ENCODE measurements at regions of chr12 and their contacts with region 1.

Region 1: GRCh38 chr12:119412811-119413794 is 78.6 kb downstream of the CCDC60 start:
- DNase-seq: peak; percentile 44 to 72
- ATAC-seq: peak; percentile 26 to 80 (median 64)
- H3K4me3 ChIP-seq: no peak overlapping the region
- H3K27ac ChIP-seq: no peak overlapping the region
- H3K4me1 ChIP-seq: peaks cover 0 to 16% (median 5%) of the 10 kb centered on the region in 9 donors
- H3K27me3 ChIP-seq: no peaks in the 10 kb centered on the region
- CTCF ChIP-seq: peak; percentile 68 to 94 (median 87)

Region 2: DNA sequence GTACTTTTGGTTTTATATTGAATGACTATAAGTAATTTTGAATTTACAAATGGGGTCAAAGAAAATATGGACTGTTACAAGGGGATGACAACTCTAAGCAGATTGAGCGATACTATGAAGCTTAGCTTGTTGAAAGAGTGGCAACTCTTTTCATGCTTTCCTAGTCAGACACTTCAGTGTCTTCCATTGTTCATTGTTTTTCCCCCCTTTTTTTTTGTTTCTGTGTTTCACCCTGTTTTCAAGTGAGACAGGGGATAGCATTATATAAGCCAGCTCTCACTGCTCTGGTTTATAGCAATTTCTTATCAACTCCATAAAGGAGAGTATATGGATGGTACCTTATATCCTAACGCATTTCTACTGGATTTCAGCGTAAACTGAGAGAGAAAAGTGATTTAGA is 1252.6 kb before region 1 on chr12:
- intact Hi-C with region 1: no loop called
- DNase-seq: no peak
- ATAC-seq: no peak
- H3K4me3 ChIP-seq: no peak overlapping the region
- H3K27ac ChIP-seq: no peak overlapping the region
- H3K4me1 ChIP-seq: no peaks in the 10 kb centered on the region
- H3K27me3 ChIP-seq: no peaks in the 10 kb centered on the region
- CTCF ChIP-seq: no peak

Region 3: DNA sequence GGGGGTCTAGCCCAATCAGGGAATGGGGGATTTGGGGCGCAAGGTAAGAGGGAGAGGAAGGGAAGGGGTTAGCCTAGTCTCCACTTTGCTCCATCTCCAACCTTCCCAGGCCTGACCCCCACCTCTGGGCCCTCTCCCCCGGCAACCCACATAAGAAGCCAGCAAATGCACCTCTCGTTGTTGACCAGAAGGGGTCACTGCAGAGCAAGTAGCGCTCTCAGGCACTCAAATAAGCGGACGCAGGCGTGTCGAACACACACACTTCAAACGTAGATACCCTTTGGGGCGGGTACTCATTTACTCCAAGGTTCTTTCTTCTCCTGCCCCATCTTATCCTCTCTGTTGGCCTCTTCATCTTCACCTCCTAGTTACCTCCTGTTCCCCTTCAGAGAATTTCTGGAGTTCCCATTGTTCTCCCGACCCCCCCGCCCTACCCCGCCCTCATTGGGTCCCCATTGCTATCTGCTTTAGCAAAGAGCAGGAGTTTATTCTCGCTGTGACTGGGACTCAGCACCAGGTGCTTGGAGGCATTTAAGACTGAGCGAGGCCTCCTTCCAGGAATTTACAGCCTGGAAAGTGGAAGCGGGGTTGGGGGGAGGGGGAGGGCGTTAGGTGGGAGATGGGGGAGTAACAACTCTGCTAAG is 433.2 kb before region 1 on chr12:
- intact Hi-C with region 1: loop called in 6 of 10 experiments (anchors 5 to 10 kb)
- DNase-seq: peak in 1 of 2 donors; percentile 17
- ATAC-seq: peak in 5 of 8 donors; percentile 31 to 64 (median 53)
- H3K4me3 ChIP-seq: no peak overlapping the region
- H3K27ac ChIP-seq: no peak overlapping the region
- H3K4me1 ChIP-seq: peaks cover 0 to 16% (median 6%) of the 10 kb centered on the region in 9 donors
- H3K27me3 ChIP-seq: peaks cover 11 to 87% (median 70%) of the 10 kb centered on the region in 7 donors
- CTCF ChIP-seq: peak; percentile 33 to 74 (median 68)

Region 4: GRCh38 chr12:119328111-119328510 is 85.0 kb before region 1 on chr12:
- intact Hi-C with region 1: loop called in 7 of 10 experiments (anchors 5 to 10 kb)
- DNase-seq: peak; percentile 8 to 42
- ATAC-seq: peak; percentile 69 to 90 (median 82)
- H3K4me3 ChIP-seq: no peak overlapping the region
- H3K27ac ChIP-seq: no peak overlapping the region
- H3K4me1 ChIP-seq: peaks cover 0 to 16% (median 6%) of the 10 kb centered on the region in 9 donors
- H3K27me3 ChIP-seq: no peaks in the 10 kb centered on the region
- CTCF ChIP-seq: peak; percentile 14 to 61 (median 53)

Region 5: GRCh38 chr12:119444456-119445044 is 31.4 kb after region 1 on chr12:
- intact Hi-C with region 1: no loop called
- DNase-seq: peak; percentile 7 to 13
- ATAC-seq: peak in 1 of 8 donors; percentile 55
- H3K4me3 ChIP-seq: no peak overlapping the region
- H3K27ac ChIP-seq: no peak overlapping the region
- H3K4me1 ChIP-seq: no peaks in the 10 kb centered on the region
- H3K27me3 ChIP-seq: peaks cover 0 to 15% (median 0%) of the 10 kb centered on the region in 7 donors
- CTCF ChIP-seq: peak; percentile 58 to 96 (median 79)

Region 6: GRCh38 chr12:119512772-119513497 is 99.8 kb after region 1 on chr12:
- intact Hi-C with region 1: no loop called
- DNase-seq: peak in 1 of 2 donors; percentile 15
- ATAC-seq: no peak
- H3K4me3 ChIP-seq: no peak overlapping the region
- H3K27ac ChIP-seq: no peak overlapping the region
- H3K4me1 ChIP-seq: no peaks in the 10 kb centered on the region
- H3K27me3 ChIP-seq: peaks cover 0 to 6% (median 0%) of the 10 kb centered on the region in 7 donors
- CTCF ChIP-seq: no peak